ENCODE measurements at regions of chr2 and their contacts with region 1.

Region 1: DNA sequence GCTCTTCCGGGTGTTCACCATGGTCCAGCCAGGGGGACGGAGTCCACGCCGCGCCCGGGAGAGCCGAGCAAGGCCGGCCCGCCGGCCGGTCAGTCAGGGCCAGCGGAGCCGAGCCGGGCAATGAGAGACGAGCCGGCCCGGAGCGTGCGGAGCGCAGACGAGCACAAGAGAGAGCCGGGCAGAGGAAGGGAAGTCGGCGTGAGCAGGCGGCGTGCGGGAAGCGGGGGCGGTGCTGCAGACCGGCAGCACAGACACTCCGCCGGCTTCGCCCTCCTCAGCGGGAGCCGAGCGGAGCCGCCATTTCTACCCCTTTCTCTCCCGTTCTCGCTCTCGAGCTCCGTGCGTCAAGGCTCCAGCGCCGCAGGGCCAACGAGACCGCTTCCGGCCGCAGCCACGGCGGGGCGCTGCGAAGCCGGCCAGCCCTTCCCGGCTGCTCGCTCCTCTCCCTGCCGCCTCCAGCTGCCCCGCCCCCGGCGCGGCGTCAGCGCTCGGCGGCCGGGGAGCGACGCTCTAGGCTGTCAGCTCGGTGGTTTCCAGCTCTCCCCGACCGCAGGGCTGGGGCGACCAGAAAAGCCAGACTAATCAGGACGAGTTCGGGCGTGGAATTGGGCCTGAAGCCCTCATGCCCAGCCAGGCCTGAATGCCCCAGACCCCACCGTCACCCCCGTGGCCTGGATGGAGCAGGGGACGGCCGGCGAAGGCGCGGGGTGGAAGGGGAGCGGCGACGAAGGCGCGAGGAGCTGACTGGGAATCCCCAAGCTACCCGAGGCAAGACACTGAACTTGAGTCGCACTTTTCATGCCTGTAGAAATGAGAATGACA is at the start of gene ATAD2B:
- DNase-seq: peak; percentile 94
- ATAC-seq: peak; percentile 89
- H3K4me3 Mint-ChIP-seq: peak within 1 kb of the TSS; percentile 98
- H3K27ac Mint-ChIP-seq: peak within 1 kb of the TSS; percentile 99
- H3K4me1 Mint-ChIP-seq: peaks cover 39% of the 10 kb centered on the region
- H3K27me3 Mint-ChIP-seq: no peaks in the 10 kb centered on the region
- total RNA-seq, gene ATAD2B: 28.2 to 32.0 TPM

Region 2: DNA sequence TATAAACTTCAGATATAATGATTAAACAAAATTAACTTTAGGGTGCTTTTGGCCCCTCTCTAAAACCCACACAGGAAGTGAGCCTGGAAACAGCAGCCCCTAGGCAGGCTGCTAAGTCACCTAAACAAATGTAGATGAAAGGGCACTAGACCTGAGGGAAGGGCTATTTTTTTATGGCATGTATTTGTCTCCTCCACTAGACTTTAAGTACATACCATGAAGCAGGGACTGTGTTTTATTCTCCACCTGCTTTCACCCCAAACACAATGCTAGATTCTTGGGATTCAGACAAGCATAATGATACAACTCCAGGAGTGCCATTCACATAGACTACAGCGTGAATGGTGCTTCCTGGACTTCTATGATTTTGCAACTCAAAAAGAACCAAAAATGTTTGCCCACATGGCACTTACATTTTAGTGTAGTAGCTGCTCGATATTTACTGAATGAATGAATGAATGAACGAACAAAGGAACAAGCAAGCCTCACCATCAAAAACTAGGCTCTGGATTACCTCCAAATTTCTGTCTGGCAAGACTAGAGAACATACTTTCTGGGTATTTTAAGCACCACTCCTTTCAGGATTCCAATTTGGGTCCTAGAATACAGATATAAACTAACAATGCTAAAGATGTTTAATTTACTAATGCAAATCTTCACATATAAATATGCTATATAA is 10.1 kb before region 1 on chr2:
- CTCF ChIA-PET with region 1: interaction called, 11 read pairs
- POLR2A ChIA-PET with region 1: interaction called, 15 read pairs
- DNase-seq: peak; percentile 35
- ATAC-seq: peak; percentile 74
- H3K4me3 Mint-ChIP-seq: no peak overlapping the region
- H3K27ac Mint-ChIP-seq: peak overlapping the region; percentile 68
- H3K4me1 Mint-ChIP-seq: peaks cover 35% of the 10 kb centered on the region
- H3K27me3 Mint-ChIP-seq: no peaks in the 10 kb centered on the region

Region 3: DNA sequence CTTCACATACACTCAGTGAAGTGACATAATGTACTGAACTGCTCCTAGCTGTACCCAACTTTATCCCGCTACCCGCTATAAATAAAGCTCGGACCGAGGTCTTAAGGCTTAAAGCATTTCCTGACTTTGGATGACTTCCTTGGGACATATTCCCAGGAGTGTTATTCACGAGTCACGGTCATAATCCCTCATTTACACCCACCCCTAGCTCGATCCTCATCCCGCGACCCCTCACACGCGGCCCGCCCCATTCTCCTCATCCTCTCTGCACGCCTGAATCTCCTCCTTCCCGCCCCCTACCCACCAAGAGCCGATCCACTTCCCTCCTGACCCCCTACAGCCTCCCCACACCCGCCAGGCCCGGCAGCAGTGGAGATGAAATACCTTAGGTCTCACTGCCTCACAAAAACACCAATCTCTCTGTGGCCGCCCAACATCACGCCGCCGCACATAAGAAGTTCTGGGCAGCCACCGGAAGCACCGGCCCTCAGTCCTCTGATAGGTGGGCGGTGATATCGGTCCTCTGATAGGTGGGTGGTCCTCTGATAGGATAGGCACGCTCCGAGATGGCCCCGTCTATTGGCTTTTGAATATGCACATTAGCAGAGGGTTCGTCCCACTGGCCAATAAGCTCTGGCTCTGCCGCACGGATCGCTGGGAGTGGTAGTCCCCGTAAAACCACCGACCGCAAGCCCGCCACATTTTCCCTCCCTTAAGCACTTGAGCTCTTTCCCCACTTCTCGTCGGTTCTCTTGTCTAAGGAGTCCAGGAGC is 120.2 kb after region 1 on chr2 and contains the start of gene WDCP:
- CTCF ChIA-PET with region 1: interaction called, 19 read pairs
- POLR2A ChIA-PET with region 1: interaction called, 24 read pairs
- DNase-seq: peak; percentile 98
- ATAC-seq: peak; percentile 99
- H3K4me3 Mint-ChIP-seq: peak within 1 kb of the TSS; percentile 90
- H3K27ac Mint-ChIP-seq: peak within 1 kb of the TSS; percentile 88
- H3K4me1 Mint-ChIP-seq: peaks cover 37% of the 10 kb centered on the region
- H3K27me3 Mint-ChIP-seq: peaks cover 5% of the 10 kb centered on the region
- total RNA-seq, gene WDCP: 23.2 to 24.1 TPM

Region 4: GRCh38 chr2:24075915-24076848 is 149.2 kb after region 1 on chr2 and contains the start of gene SF3B6:
- CTCF ChIA-PET with region 1: interaction called, 74 read pairs
- POLR2A ChIA-PET with region 1: interaction called, 37 read pairs
- DNase-seq: peak; percentile 100
- ATAC-seq: peak; percentile 93
- H3K4me3 Mint-ChIP-seq: peak within 1 kb of the TSS; percentile 98
- H3K27ac Mint-ChIP-seq: peak within 1 kb of the TSS; percentile 98
- H3K4me1 Mint-ChIP-seq: peaks cover 40% of the 10 kb centered on the region
- H3K27me3 Mint-ChIP-seq: no peaks in the 10 kb centered on the region
- total RNA-seq, gene SF3B6: 94.6 to 96.2 TPM

Region 5: DNA sequence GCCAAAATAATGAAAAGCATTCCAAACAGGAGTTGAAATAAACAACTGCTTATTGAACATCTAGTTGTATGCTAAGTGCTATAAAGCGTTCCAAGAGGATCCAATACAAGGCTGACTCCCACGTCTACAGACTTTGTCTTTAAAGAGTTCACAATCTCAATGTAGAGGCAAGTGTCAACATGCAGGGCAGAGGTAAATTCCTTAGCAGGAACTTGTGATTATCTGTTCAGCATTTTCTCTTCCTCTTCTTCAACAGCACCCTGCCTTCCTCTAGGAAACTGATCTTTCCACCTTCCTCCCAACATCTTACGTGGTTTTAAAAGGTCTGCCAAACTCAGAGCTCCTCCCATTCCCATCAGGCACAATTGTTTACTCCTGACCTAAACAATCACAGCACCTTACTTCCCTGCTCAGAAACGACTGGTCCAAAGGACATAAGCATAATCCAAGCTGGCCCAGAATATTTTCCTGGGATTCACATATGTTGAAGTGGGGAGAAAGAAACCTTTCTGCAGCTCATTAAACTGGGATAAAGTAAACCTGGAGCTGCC is 349.5 kb after region 1 on chr2:
- CTCF ChIA-PET with region 1: no interaction called
- POLR2A ChIA-PET with region 1: no interaction called
- DNase-seq: no peak
- ATAC-seq: no peak
- H3K4me3 Mint-ChIP-seq: no peak overlapping the region
- H3K27ac Mint-ChIP-seq: no peak overlapping the region
- H3K4me1 Mint-ChIP-seq: no peaks in the 10 kb centered on the region
- H3K27me3 Mint-ChIP-seq: no peaks in the 10 kb centered on the region

Region 6: GRCh38 chr2:24360050-24360962 is 433.3 kb after region 1 on chr2 and contains the start of gene ITSN2:
- CTCF ChIA-PET with region 1: no interaction called
- POLR2A ChIA-PET with region 1: interaction called, 14 read pairs
- DNase-seq: peak; percentile 85
- ATAC-seq: peak; percentile 95
- H3K4me3 Mint-ChIP-seq: peak within 1 kb of the TSS; percentile 84
- H3K27ac Mint-ChIP-seq: peak within 1 kb of the TSS; percentile 95
- H3K4me1 Mint-ChIP-seq: peaks cover 31% of the 10 kb centered on the region
- H3K27me3 Mint-ChIP-seq: peaks cover 5% of the 10 kb centered on the region
- total RNA-seq, gene ITSN2: 69.7 to 71.2 TPM

Measured in activated CD8-positive, alpha-beta T cell treated with anti-CD3 and anti-CD28 coated beads, Interleukin-2, amount 10 ng/mL, durations not matched to agents 7 days and 5 days (primary cell).